Right ventricle myocardium inferior (tissue), 1 donor: ENCODE measurements at regions of chr7 and their contacts with region 1.

Region 1: DNA sequence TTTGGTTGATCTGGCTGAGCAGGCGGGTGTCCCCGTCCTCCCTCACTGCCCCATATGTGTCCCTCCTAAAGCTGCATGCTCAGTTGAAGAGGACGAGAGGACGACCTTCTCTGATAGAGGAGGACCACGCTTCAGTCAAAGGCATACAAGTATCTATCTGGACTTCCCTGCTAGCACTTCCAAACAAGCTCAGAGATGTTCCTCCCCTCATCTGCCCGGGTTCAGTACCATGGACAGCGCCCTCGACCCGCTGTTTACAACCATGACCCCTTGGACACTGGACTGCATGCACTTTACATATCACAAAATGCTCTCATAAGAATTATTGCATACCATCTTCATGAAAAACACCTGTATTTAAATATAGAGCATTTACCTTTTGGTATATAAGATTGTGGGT is 26.9 kb upstream of the TRIM56 start:
- DNase-seq: peak; percentile 73
- ATAC-seq: peak; percentile 50

Region 2: GRCh38 chr7:100369105-100369504 is 689.2 kb before region 1 on chr7:
- intact Hi-C with region 1: no loop called
- DNase-seq: peak; percentile 92
- ATAC-seq: peak; percentile 71

Region 3: GRCh38 chr7:100736671-100737070 is 321.7 kb before region 1 on chr7:
- intact Hi-C with region 1: loop called (anchors 10 kb)
- DNase-seq: no peak
- ATAC-seq: no peak

Region 4: DNA sequence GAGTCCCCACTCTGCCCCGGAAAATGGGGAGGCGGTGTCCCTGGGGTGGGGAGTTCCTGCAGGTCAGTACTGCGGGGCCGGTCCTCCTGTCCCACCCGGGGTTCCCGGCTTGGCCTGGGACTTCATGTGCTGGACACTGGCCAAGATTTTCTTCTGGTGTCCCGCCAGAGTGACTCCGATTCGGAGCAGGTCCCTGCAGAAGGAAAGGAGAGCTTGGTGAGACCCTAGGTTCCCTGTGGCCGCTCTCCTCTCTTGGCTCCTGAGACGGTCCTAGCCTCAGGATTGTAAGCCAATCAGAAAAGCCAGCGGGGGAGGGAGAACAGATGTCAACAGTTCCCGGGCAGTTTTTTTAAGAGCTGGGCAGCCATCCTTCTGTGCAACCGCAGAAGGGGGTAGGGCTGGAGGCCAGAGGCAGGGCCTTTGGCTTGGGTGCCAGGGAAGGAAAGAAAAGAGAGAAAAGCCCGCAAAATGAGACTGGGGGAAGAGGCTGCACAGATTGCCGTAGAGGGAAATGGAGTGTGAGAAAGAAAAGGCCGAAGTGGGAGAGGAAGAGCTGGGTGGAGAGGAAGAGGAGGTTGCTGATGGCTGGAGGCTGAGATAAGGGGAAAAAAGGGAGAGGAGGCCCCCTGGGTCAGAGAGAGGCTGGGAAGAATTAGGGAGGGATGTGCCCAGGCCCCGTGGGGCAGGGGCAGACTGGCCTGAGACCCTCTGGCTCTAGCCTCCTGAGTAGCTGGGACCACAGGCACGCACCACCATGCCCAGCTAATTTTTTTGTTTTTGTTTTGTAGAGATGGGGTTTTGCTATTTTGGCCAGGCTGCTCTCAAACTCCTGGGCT is 254.7 kb before region 1 on chr7:
- intact Hi-C with region 1: loop called (anchors 2 kb)
- DNase-seq: peak; percentile 82
- ATAC-seq: peak; percentile 85

Region 5: DNA sequence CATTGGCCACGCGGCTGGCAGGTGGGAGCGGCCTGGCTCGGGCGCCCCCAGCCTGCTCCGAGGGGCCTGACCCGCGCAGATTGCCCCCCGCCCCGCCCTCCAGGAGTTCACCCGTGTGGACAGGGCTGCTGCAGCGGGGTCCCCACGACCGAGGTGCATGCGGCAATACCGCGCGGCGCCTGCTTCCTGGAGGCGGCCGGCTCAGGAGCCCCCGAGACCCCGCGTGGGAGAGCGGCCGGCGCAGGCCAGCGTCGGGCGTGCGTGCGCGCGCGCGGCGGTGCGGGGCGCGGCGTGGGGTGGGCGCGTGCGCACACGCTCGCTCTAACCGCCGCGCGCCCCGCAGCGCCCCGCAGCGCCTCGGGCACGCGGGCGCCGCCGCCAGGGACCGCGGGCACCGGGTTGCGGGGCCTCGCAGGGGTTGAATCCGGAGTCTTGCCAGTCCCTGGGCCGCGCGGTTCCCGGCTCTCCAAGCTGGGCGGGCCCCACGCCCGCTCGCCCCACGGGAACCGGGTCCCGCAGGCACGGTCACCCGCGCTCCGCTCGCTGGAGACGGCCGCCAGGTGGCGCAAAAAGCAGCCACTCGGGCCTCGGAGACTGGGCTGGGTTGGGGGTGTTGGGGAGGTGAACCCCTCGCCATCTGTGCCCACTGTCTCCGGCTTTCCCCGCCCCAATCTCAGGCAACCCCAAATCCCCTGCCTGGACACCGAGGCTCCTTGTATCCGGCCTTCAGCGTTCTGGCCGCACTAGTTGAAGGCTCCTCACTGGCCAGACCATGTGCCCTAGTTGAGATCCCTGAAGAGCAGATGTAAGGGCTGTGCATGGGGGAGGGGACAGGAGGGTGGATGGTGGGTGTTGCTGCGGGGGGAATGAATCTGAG is 161.4 kb before region 1 on chr7:
- intact Hi-C with region 1: loop called (anchors 1 kb)
- DNase-seq: peak; percentile 80
- ATAC-seq: no peak

Region 6: GRCh38 chr7:100965723-100966541 is 92.4 kb before region 1 on chr7:
- intact Hi-C with region 1: loop called (anchors 5 kb)
- DNase-seq: peak; percentile 76
- ATAC-seq: peak; percentile 26